Thyroid gland (tissue), 4 donors: ENCODE measurements at regions of chr16 and their contacts with region 1.

Region 1: GRCh38 chr16:14529010-14529669 is 100.9 kb downstream of the PARN start:
- DNase-seq: peak; percentile 75 to 84
- H3K4me3 ChIP-seq: no peak overlapping the region
- H3K27ac ChIP-seq: peak overlapping the region in 2 of 3 donors; percentile 41 to 50
- H3K4me1 ChIP-seq: peaks cover 23 to 26% of the 10 kb centered on the region in 2 donors
- H3K27me3 ChIP-seq: no peaks in the 10 kb centered on the region
- CTCF ChIP-seq: peak; percentile 42 to 93 (median 82)
- POLR2A ChIP-seq: peak in 1 of 2 donors; percentile 23

Region 2: DNA sequence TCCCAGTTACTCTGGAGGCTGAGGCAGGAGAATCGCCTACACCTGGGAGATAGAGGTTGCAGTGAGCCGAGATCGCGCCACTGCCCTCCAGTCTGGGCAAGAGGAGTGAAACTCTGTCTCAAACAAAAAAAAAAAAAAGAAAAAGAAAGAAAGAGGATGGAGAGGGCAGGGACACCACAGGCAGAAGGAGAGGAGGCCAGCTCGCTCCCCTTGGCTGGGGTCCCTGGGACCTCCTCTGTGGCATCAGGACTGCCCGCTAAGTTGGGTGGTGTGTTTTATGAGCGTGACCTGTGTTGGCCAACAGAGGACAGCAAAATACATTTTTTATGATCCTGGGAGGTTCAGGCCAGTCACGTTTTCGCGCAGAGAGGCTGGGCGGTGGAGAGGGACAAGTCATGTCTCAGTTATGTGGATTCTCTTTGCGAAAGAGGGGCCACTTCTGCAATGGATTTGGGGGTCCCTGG is 228.4 kb before region 1 on chr16:
- intact Hi-C with region 1: loop called (anchors 5 kb)
- DNase-seq: peak; percentile 77 to 81
- H3K4me3 ChIP-seq: peak overlapping the region in 1 of 3 donors; percentile 82
- H3K27ac ChIP-seq: peak overlapping the region in 2 of 3 donors; percentile 14 to 51
- H3K4me1 ChIP-seq: peaks cover 10 to 11% of the 10 kb centered on the region in 2 donors
- H3K27me3 ChIP-seq: no peaks in the 10 kb centered on the region
- CTCF ChIP-seq: peak in 5 of 6 experiments; percentile 33 to 80 (median 72)
- POLR2A ChIP-seq: no peak

Region 3: GRCh38 chr16:14486520-14487303 is 42.4 kb before region 1 on chr16:
- intact Hi-C with region 1: loop called (anchors 5 kb)
- DNase-seq: peak; percentile 91 to 94
- H3K4me3 ChIP-seq: no peak overlapping the region
- H3K27ac ChIP-seq: peak overlapping the region; percentile 28 to 62 (median 56)
- H3K4me1 ChIP-seq: peaks cover 24 to 29% of the 10 kb centered on the region in 2 donors
- H3K27me3 ChIP-seq: no peaks in the 10 kb centered on the region
- CTCF ChIP-seq: peak in 1 of 6 experiments; percentile 17
- POLR2A ChIP-seq: peak in 1 of 2 donors; percentile 23

Region 4: DNA sequence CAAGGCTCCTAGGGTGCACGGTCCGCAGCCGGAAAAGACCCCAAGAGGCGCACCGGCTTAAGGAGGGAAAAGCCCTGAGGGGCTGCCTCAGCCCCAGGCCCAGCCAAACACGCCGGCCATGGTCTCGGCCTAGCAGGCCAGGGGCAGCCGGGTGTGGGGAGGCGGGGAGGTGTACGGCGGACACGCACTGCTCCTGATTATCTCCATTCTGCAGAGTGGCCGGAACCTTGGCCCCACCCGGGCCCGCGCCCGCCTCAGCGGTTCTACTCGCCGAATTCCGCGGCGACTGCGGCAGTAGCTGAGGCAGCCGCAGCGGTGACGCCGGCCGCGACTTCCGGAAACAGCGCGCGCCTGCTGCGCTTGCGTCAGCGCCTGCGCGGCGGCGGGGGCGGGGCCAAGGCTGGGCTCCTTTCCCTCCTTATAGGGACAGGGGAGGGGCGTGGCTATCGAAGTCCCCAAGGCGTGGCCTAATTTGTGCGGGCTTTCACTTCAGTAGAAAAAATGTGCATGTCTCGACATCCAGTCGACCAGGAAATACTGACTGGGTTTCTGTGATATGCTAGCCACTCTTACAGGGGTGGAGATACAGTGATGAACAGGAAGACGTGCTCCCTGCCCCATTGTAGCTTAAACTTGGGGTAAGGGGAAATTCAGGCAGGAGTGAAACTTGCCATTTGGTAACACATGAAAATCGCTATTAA is 100.9 kb after region 1 on chr16 and contains the start of gene PARN:
- intact Hi-C with region 1: no loop called
- DNase-seq: peak; percentile 97
- H3K4me3 ChIP-seq: peak within 1 kb of the TSS; percentile 73 to 82 (median 75)
- H3K27ac ChIP-seq: peak within 1 kb of the TSS; percentile 82 to 92 (median 89)
- H3K4me1 ChIP-seq: peaks cover 22 to 35% of the 10 kb centered on the region in 2 donors
- H3K27me3 ChIP-seq: no peaks in the 10 kb centered on the region
- CTCF ChIP-seq: no peak
- POLR2A ChIP-seq: peak; percentile 71 to 94
- total RNA-seq, gene PARN: 69.8 to 214 (median 120) TPM

Region 5: DNA sequence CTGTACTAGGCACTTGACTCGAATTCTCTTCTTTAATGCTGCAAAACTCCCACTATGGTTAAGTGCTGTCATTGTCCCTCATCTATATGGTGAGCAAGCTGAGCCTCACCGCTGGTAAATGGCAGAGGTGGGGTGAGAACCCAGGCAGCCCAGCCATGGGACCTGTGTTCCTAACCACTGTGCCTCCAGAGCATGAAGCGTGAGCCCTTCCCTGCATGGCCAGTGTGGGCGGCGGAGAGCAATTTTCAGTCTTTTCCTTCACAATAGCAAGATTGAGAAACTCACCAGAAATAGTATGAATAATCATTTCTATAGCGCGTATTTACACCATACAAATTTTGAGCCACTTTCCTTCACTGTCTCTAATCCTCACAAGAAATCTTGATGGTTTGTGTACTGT is 112.8 kb after region 1 on chr16:
- intact Hi-C with region 1: no loop called
- DNase-seq: no peak
- H3K4me3 ChIP-seq: no peak overlapping the region
- H3K27ac ChIP-seq: no peak overlapping the region
- H3K4me1 ChIP-seq: peaks cover 0 to 6% of the 10 kb centered on the region in 2 donors
- H3K27me3 ChIP-seq: no peaks in the 10 kb centered on the region
- CTCF ChIP-seq: no peak
- POLR2A ChIP-seq: no peak